ENCODE measurements at regions of chr2 and their contacts with region 1.

Region 1: DNA sequence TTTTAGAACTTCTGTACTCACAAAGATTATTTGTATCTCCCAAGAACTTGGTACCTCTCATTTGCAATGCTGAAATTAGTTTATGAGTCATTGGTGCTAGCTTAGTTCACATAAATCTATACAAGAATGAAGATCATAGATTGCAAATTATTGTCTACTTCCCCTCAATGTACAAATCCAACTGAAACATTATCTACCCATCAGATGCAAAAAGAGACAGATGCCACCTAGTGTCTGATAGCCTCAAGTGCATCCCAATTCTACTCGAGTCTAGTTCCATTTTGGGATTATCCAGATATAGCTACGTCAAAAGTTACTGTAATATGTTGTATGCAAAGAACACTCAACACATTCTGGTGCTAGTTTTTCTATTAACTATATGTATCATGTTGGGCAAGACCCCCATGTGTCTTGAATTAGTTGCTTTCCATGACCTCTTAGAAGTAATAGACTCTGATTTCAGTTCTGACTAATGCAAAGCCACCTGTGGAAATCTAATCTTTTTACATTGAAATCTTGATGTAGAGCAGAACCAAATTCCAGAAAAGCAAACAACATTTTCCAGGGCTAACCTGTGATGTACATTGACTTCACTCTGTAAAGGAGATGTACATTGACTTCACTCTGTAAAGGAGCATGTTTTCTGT is 210.0 kb downstream of the RBM43 start:
- DNase-seq: peak; percentile 57
- H3K4me3 Mint-ChIP-seq: no peak overlapping the region
- H3K27ac Mint-ChIP-seq: no peak overlapping the region
- H3K4me1 Mint-ChIP-seq: no peaks in the 10 kb centered on the region
- H3K27me3 Mint-ChIP-seq: peaks cover 4% of the 10 kb centered on the region

Region 2: DNA sequence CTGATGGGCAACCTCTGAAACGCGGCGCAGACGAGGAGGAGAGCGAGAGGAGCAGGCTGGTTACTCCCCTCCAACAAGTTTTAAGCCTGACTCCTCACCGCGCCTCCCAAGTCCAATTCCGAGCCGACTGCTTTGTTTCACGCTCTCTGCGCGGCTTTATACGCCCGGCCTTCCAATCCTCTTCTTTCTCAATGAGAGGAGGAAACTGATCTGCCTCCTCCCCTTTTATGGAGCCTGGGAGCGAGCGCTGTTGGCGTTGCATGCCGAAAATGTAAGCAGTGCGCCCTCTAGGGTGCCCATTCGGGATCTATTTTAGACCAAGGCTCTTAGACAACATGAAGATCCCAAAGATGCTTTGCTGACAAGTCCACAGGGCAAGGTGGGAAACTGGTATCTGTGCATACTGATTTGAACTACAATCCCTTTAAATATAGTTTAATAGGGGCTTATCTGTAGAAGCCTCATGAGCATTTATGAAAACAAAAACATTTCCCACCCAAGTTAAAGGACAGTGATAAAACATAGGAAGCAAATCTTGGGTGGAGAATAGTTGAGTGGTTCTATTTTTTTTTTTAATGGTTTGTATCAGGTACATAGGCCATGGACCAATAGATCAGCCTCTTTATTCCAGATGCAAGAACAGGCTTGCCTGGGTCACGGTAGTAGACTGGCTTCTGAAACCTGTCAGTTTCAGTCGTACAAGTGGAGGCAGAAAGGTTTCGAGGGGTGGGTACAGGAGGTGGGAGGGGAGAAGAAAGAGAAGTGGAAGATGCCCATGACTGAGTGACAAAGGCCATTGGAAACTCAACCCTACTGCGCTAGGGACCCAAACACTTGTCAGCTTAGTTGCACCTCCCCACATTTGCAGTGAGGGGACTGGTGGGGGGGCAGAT is 563.9 kb before region 1 on chr2 and contains the start of gene RND3:
- CTCF ChIA-PET with region 1: no interaction called
- intact Hi-C with region 1: loop called (anchors 5 kb)
- DNase-seq: peak; percentile 77
- H3K4me3 Mint-ChIP-seq: peak within 1 kb of the TSS; percentile 26
- H3K27ac Mint-ChIP-seq: no peak within 1 kb of the TSS
- H3K4me1 Mint-ChIP-seq: peaks cover 12% of the 10 kb centered on the region
- H3K27me3 Mint-ChIP-seq: peaks cover 66% of the 10 kb centered on the region
- total RNA-seq, gene RND3: not detected

Region 3: GRCh38 chr2:150601280-150602038 is 450.2 kb before region 1 on chr2:
- CTCF ChIA-PET with region 1: no interaction called
- intact Hi-C with region 1: loop called (anchors 5 kb)
- DNase-seq: no peak
- H3K4me3 Mint-ChIP-seq: no peak overlapping the region
- H3K27ac Mint-ChIP-seq: no peak overlapping the region
- H3K4me1 Mint-ChIP-seq: no peaks in the 10 kb centered on the region
- H3K27me3 Mint-ChIP-seq: peaks cover 2% of the 10 kb centered on the region

Region 4: GRCh38 chr2:151238527-151239487 is 187.1 kb after region 1 on chr2:
- CTCF ChIA-PET with region 1: interaction called, 7 read pairs
- intact Hi-C with region 1: loop called (anchors 1 kb)
- DNase-seq: peak; percentile 43
- H3K4me3 Mint-ChIP-seq: no peak overlapping the region
- H3K27ac Mint-ChIP-seq: no peak overlapping the region
- H3K4me1 Mint-ChIP-seq: peaks cover 2% of the 10 kb centered on the region
- H3K27me3 Mint-ChIP-seq: no peaks in the 10 kb centered on the region

Measured in activated naive CD4-positive, alpha-beta T cell treated with anti-CD3 and anti-CD28 coated beads for 36 hours (primary cell).